Activated CD4-positive, alpha-beta memory T cell treated with anti-CD3 and anti-CD28 coated beads, Interleukin-2, amount 10 ng/mL, durations not matched to agents 7 days and 5 days (primary cell): ENCODE measurements at regions of chr12 and their contacts with region 1.

Region 1: DNA sequence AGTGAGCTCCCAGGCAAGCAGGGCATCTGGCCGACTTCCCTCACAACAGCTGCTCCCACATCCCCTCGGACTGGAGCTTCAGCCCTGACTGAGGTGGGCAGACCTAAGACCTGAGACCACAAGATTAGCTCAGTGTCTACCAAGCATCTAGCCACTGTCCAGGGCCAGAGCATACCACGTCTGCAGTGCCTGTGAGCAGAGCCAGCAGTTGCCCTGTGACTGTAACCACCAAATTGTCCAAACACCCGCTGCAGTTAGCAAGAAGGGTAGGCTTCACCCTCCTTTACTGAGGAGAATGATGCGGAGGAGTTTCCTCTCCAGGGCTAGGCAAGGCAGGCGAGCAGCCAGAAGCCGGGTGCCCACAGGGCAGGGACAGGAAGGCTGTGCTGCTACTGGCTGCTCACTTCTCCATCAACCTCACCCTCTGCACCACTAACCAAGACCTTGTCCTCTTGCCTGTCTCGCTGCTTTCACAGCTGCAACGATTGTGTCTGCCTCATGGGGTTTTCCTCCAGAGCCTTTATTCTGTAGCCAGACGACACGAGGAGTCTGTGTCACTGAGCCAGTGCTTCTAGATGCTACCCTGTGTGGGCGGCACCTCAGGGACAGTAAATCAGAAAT is 53.9 kb downstream of the ANAPC7 start:
- DNase-seq: peak; percentile 45
- H3K4me3 Mint-ChIP-seq: no peak overlapping the region
- H3K27ac Mint-ChIP-seq: peak overlapping the region; percentile 58
- H3K4me1 Mint-ChIP-seq: peaks cover 37% of the 10 kb centered on the region
- H3K27me3 Mint-ChIP-seq: no peaks in the 10 kb centered on the region

Region 2: DNA sequence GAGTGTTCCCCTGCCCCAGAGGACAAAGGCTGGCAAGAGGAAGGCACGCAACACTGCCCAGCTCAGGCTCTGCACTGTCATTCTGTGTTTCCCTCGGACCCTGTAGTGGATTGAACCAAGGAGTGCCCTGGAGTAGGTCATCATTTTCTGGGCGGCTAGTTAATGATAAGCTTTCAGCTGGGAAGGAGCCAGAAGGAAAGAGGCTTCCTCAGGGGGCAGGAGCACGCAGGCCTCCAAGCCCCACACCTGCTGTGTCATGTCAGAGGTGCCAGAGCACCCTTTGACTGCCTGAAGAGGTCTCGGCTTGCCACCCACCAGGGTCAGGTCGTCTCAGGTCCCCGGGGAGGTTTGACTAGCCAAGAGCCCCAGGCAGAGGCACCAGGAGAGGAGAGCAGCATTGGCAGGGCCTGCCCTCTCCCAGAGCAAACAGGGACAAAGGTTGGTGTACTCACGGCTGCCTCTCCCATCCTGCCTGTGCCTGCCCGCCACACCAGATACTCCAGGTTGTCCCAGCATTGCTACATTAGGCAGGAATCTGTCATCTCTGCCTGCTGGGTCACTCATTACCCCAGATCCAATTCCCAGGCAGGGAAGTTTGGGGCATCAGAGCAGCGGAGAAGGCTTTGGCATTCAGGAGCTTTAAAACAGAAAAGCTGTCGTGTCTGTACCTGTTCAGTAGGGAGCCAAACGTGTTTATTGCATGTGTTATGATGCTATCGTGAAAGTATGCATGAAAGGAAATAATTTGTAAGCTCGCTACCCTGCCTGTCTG is 102.1 kb before region 1 on chr12:
- CTCF ChIA-PET with region 1: no interaction called
- POLR2A ChIA-PET with region 1: no interaction called
- DNase-seq: no peak
- H3K4me3 Mint-ChIP-seq: no peak overlapping the region
- H3K27ac Mint-ChIP-seq: no peak overlapping the region
- H3K4me1 Mint-ChIP-seq: no peaks in the 10 kb centered on the region
- H3K27me3 Mint-ChIP-seq: peaks cover 3% of the 10 kb centered on the region

Region 3: GRCh38 chr12:110289044-110289710 is 60.5 kb before region 1 on chr12:
- CTCF ChIA-PET with region 1: no interaction called
- POLR2A ChIA-PET with region 1: no interaction called
- DNase-seq: peak; percentile 4
- H3K4me3 Mint-ChIP-seq: no peak overlapping the region
- H3K27ac Mint-ChIP-seq: peak overlapping the region; percentile 29
- H3K4me1 Mint-ChIP-seq: peaks cover 60% of the 10 kb centered on the region
- H3K27me3 Mint-ChIP-seq: no peaks in the 10 kb centered on the region

Region 4: GRCh38 chr12:110335481-110336045 is 14.1 kb before region 1 on chr12:
- CTCF ChIA-PET with region 1: interaction called, 3 read pairs
- POLR2A ChIA-PET with region 1: interaction called, 13 read pairs
- DNase-seq: no peak
- H3K4me3 Mint-ChIP-seq: no peak overlapping the region
- H3K27ac Mint-ChIP-seq: no peak overlapping the region
- H3K4me1 Mint-ChIP-seq: peaks cover 2% of the 10 kb centered on the region
- H3K27me3 Mint-ChIP-seq: no peaks in the 10 kb centered on the region

Region 5: GRCh38 chr12:110468212-110469048 is 118.8 kb after region 1 on chr12 and contains the starts of genes FAM216A and GPN3:
- CTCF ChIA-PET with region 1: no interaction called
- POLR2A ChIA-PET with region 1: no interaction called
- DNase-seq: peak; percentile 98
- H3K4me3 Mint-ChIP-seq: peak within 1 kb of the TSS; percentile 92
- H3K27ac Mint-ChIP-seq: peak within 1 kb of the TSS; percentile 95
- H3K4me1 Mint-ChIP-seq: peaks cover 37% of the 10 kb centered on the region
- H3K27me3 Mint-ChIP-seq: no peaks in the 10 kb centered on the region
- total RNA-seq, gene FAM216A: 14.7 to 16.7 TPM
- total RNA-seq, gene GPN3: 18.9 to 21.6 TPM